Dendritic cell treated with granulocyte-macrophage colony-stimulating factor and Interleukin-4, amounts not matched to agents 40 ng/mL and 50 ng/mL, for 4 days (primary cell): ENCODE measurements at regions of chr3 and their contacts with region 1.

Region 1: GRCh38 chr3:97793420-97794019 is 28.3 kb upstream of the CRYBG3 start:
- H3K4me3 Mint-ChIP-seq: no peak overlapping the region
- H3K27ac Mint-ChIP-seq: no peak overlapping the region
- H3K4me1 Mint-ChIP-seq: no peaks in the 10 kb centered on the region
- H3K27me3 Mint-ChIP-seq: no peaks in the 10 kb centered on the region

Region 2: DNA sequence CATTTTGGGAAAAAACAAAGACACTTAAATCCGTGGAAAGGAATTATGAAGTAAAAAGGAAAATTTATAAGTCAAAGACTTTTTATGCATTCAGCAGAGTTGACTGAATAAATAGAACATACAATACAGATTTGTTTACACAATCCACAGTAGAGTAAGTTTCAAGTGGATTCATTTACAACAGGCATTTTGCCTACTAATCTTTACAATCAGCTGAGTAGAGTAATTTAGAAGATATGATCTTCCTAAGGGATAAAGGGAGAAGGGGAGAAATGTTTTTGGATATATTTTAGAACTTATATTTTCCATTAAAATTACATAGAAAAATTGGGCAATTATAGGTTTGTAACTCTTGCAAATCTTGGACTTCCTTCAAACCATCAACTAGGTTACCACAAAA is 588.9 kb before region 1 on chr3:
- intact Hi-C with region 1: no loop called
- H3K4me3 Mint-ChIP-seq: no peak overlapping the region
- H3K27ac Mint-ChIP-seq: no peak overlapping the region
- H3K4me1 Mint-ChIP-seq: no peaks in the 10 kb centered on the region
- H3K27me3 Mint-ChIP-seq: no peaks in the 10 kb centered on the region

Region 3: DNA sequence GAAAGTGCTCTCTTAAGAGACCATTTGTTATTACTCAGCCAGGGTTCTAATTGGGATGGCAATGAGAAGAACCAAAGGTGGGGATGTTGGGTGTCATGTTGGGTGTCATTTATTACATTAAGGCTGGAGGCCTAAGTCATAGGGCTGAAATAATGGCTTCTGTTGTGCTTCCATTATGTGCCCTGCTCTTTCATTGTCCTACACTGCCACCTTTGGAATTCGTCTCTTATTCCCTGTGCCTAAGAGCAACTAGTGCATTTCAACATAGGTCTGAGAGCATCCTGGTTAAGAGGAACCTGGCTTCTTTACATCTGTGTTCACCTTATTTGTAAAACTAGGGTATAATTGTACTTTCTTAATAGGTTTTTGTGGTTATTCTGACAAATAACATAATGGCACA is 146.5 kb after region 1 on chr3:
- intact Hi-C with region 1: no loop called
- H3K4me3 Mint-ChIP-seq: no peak overlapping the region
- H3K27ac Mint-ChIP-seq: no peak overlapping the region
- H3K4me1 Mint-ChIP-seq: peaks cover 26% of the 10 kb centered on the region
- H3K27me3 Mint-ChIP-seq: no peaks in the 10 kb centered on the region

Region 4: GRCh38 chr3:98022978-98023820 is 229.7 kb after region 1 on chr3:
- intact Hi-C with region 1: loop called (anchors 1 kb)
- H3K4me3 Mint-ChIP-seq: no peak overlapping the region
- H3K27ac Mint-ChIP-seq: no peak overlapping the region
- H3K4me1 Mint-ChIP-seq: peaks cover 5% of the 10 kb centered on the region
- H3K27me3 Mint-ChIP-seq: no peaks in the 10 kb centered on the region